ENCODE measurements at regions of chr21 and their contacts with region 1.

Region 1: GRCh38 chr21:26850108-26850643 is 5.0 kb upstream of the ADAMTS1 start:
- DNase-seq: no peak
- H3K4me3 ChIP-seq: peak overlapping the region; percentile 4
- H3K27ac ChIP-seq: no peak overlapping the region
- H3K4me1 ChIP-seq: no peaks in the 10 kb centered on the region
- H3K27me3 ChIP-seq: no peaks in the 10 kb centered on the region
- CTCF ChIP-seq: peak; percentile 86 to 97 (median 89)
- EP300 ChIP-seq: no peak
- POLR2A ChIP-seq: no peak

Region 2: GRCh38 chr21:26834181-26834945 is 15.8 kb before region 1 on chr21:
- intact Hi-C with region 1: no loop called
- DNase-seq: no peak
- H3K4me3 ChIP-seq: no peak overlapping the region
- H3K27ac ChIP-seq: no peak overlapping the region
- H3K4me1 ChIP-seq: no peaks in the 10 kb centered on the region
- H3K27me3 ChIP-seq: no peaks in the 10 kb centered on the region
- CTCF ChIP-seq: peak in 1 of 3 donors; percentile 26
- EP300 ChIP-seq: no peak
- POLR2A ChIP-seq: no peak

Region 3: GRCh38 chr21:27480841-27481261 is 630.7 kb after region 1 on chr21:
- intact Hi-C with region 1: no loop called
- DNase-seq: no peak
- H3K4me3 ChIP-seq: no peak overlapping the region
- H3K27ac ChIP-seq: no peak overlapping the region
- H3K4me1 ChIP-seq: peaks cover 2% of the 10 kb centered on the region
- H3K27me3 ChIP-seq: no peaks in the 10 kb centered on the region
- CTCF ChIP-seq: no peak
- EP300 ChIP-seq: no peak
- POLR2A ChIP-seq: no peak

Region 4: DNA sequence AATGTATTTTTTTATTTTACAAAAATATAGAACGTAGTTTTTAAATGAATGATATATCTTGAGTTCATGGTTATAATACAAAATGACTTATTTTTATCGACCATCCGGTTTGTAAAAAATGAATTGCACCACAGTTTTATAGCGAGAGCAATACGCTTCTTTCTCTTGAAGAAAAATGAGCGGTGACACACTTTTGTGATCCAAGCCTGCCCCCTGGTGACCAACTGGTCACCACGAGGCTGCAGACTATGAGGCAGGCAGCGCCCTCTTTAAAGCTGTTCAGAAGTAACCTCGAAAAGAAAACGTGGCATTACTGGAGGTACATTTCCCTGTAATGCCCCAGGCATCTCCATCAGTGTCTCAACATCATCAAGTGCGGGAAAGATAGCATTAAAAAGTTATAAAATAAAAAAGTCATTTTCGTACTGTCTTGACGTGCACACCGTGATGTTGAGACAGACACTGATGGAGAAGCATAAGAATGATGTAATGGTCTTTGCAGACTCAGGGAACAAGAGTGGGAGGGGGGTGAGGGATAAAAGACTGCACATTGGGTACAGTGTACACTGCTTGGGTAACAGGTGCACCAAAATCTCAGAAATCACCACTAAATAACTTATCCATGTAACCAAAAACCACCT is 850.9 kb after region 1 on chr21:
- intact Hi-C with region 1: loop called (anchors 5 kb)
- DNase-seq: peak; percentile 83 to 92 (median 90)
- H3K4me3 ChIP-seq: no peak overlapping the region
- H3K27ac ChIP-seq: no peak overlapping the region
- H3K4me1 ChIP-seq: no peaks in the 10 kb centered on the region
- H3K27me3 ChIP-seq: no peaks in the 10 kb centered on the region
- CTCF ChIP-seq: peak; percentile 26 to 87 (median 82)
- EP300 ChIP-seq: no peak
- POLR2A ChIP-seq: no peak

Region 5: DNA sequence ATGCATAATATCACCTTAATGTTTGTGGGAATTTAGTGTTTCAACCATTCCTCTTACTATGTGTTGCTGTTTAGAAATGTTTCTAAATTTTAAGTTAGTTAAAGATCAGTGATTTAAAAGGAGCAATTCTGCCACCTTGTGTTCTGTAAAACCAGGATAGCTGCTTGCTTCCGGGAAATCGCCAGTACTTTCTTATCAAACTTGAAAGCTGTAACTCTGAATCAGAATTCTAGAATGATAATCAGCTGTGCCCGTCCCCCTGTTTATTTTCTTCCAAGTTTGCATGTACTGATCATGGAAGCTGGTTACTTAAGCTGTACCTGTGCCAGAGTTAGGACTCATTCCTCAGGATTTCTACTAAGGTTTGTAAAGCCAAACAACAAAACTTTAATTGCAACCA is 1486.1 kb after region 1 on chr21:
- intact Hi-C with region 1: loop called (anchors 5 to 10 kb)
- DNase-seq: peak in 2 of 5 donors; percentile 15 to 39
- H3K4me3 ChIP-seq: no peak overlapping the region
- H3K27ac ChIP-seq: peak overlapping the region in 1 of 2 donors; percentile 12
- H3K4me1 ChIP-seq: peaks cover 3% of the 10 kb centered on the region
- H3K27me3 ChIP-seq: no peaks in the 10 kb centered on the region
- CTCF ChIP-seq: peak; percentile 15 to 56 (median 56)
- EP300 ChIP-seq: no peak
- POLR2A ChIP-seq: no peak

Region 6: DNA sequence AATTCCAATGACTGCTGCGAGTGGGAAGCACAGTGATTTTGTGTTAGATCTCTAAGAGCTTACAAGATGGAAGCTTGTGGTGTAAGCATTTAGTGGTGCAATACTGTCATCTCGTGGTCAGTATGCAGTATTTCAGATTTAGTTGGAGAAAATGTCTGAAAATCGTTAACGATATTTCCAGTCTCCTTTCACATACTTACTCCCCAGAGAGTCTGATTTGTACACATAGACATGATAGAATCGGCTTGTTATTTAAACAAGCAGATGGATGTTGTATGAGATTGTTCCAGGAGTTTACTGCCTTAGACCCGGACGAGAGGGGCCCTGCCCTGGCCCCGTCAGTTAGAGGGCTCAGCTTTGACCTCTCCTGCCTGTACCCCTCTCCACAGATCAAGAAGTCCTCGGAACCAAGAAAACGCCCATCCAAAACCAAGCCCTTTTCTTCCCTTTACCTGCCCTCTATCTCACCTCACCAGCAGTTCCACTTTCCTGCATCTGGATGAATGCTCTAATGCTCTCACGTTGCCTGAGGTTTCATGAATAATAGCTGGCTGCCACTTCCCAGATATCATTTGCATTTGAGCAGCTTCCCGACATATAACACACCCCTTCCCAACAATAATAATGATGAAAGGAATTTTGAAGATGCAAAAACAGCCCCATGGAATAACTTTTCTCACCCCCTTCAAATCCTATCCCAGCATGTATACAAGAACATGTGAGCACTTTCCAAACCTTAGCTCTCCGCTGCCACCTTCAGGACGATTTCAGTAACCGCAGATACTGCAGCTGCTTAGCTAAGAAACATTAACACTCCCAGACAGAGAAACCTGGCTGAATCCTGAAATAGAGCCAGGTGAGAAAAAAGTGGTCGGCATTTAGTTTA is 1895.2 kb after region 1 on chr21:
- intact Hi-C with region 1: loop called in 3 of 4 experiments (anchors 5 to 10 kb)
- DNase-seq: peak; percentile 64 to 80 (median 73)
- H3K4me3 ChIP-seq: peak overlapping the region; percentile 27
- H3K27ac ChIP-seq: peak overlapping the region in 1 of 2 donors; percentile 51
- H3K4me1 ChIP-seq: peaks cover 2% of the 10 kb centered on the region
- H3K27me3 ChIP-seq: no peaks in the 10 kb centered on the region
- CTCF ChIP-seq: peak; percentile 95 to 97 (median 95)
- EP300 ChIP-seq: no peak
- POLR2A ChIP-seq: no peak